HepG2 (cell line): ENCODE measurements at regions of chr2 and their contacts with region 1.

Region 1: DNA sequence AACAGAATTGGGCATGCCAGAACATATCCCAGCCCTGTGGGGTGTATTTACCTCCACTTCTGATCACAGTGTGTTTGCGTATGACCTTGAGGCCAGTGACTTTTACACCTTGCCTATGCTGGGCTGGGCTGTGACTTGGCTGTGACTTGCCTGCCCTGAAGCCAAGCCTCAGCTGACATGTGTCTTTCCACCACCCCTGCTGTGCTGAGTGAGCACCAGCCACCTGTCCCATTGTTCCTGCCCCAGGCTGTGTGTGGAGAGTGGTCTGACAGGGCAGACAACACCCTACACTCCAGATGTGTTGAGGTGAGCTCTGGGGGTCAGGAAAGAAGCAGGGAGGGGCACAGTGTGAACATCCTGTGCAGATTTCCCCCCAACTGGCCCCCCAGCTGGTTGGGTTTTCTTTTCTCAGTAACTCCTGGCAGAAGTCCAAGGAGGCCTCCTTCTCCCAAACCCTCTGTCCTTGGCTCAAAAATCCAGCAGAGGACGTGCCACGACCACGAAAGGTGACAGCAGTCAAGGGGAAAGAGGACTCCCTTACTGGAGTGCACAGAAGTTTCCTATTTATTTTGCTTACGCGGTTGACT is 5.1 kb upstream of the STEAP3 start:
- DNase-seq: peak; percentile 69
- ATAC-seq: peak; percentile 25
- H3K4me3 ChIP-seq: peak overlapping the region in 1 of 3 experiments; percentile 17; a peak in 1 of 6 replicates
- H3K27ac ChIP-seq: no peak overlapping the region
- H3K4me1 ChIP-seq: peaks cover 52% of the 10 kb centered on the region
- H3K27me3 ChIP-seq: 0 out of 5 replicates have a peak, but pooled peaks cover 0 to 4% of the 10 kb centered on the region in 2 experiments
- CTCF ChIP-seq: peak; percentile 87
- EP300 ChIP-seq: no peak
- POLR2A ChIP-seq: no peak
- RAD21 ChIP-seq: peak; percentile 75

Region 2: DNA sequence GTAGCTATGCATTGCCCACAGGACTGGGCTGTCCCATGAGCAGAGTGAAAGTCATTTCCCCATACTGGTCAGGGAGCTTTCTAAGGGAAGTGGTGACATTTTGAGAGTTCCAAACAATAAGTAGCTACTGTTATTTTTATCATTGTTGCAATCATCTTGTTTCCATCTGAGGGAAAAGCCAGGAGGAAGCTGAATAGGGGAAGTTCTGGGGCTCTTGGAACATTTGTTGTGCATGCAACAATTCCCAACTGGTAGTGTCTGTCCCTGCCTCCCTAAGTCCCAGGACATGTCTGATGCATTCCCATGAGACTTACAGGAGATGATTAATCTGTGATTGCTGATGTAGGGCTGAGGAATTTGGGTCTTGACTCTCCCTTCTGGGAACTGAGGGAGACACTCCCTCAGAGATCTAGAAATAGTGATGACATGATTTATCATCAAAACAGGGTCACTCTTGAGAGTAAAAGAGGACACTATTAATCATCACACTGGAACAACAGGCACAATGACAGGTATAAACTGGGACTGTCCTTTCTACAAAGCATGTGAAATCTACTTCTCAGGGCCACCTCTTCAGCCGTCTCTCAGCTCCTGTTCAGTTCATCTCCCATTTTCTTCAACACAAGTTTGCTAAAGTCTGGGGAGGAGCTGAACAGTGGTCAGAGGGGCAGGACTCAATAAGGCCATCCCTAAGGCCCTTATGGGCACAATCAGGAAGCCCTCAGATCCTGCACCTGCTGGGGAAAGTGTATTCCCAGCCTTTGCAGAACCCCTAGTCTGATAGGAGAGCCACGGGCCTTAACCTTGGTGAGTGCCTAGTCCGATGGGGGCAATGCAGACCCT is 304.5 kb before region 1 on chr2:
- CTCF ChIA-PET with region 1: no interaction called
- POLR2A ChIA-PET with region 1: no interaction called
- in situ Hi-C with region 1: no loop called
- intact Hi-C with region 1: no loop called
- DNase-seq: no peak
- ATAC-seq: no peak
- H3K4me3 ChIP-seq: no peak overlapping the region
- H3K27ac ChIP-seq: no peak overlapping the region
- H3K4me1 ChIP-seq: no peaks in the 10 kb centered on the region
- H3K27me3 ChIP-seq: peaks cover 2 to 3% of the 10 kb centered on the region in 2 experiments; a peak in 1 of 5 replicates
- CTCF ChIP-seq: no peak
- EP300 ChIP-seq: no peak
- POLR2A ChIP-seq: no peak
- RAD21 ChIP-seq: no peak

Region 3: GRCh38 chr2:119264781-119265692 is 46.5 kb after region 1 on chr2:
- CTCF ChIA-PET with region 1: interaction called, 17 read pairs
- POLR2A ChIA-PET with region 1: interaction called, 4 read pairs
- in situ Hi-C with region 1: loop called (anchors 5 kb)
- intact Hi-C with region 1: loop called (anchors 1 kb)
- DNase-seq: peak; percentile 51
- ATAC-seq: peak; percentile 98
- H3K4me3 ChIP-seq: no peak overlapping the region
- H3K27ac ChIP-seq: no peak overlapping the region
- H3K4me1 ChIP-seq: peaks cover 10% of the 10 kb centered on the region
- H3K27me3 ChIP-seq: no peaks in the 10 kb centered on the region
- CTCF ChIP-seq: peak; percentile 96
- EP300 ChIP-seq: no peak
- POLR2A ChIP-seq: no peak
- RAD21 ChIP-seq: peak; percentile 83